ENCODE measurements at regions of chr3 and their contacts with region 1.

Region 1: DNA sequence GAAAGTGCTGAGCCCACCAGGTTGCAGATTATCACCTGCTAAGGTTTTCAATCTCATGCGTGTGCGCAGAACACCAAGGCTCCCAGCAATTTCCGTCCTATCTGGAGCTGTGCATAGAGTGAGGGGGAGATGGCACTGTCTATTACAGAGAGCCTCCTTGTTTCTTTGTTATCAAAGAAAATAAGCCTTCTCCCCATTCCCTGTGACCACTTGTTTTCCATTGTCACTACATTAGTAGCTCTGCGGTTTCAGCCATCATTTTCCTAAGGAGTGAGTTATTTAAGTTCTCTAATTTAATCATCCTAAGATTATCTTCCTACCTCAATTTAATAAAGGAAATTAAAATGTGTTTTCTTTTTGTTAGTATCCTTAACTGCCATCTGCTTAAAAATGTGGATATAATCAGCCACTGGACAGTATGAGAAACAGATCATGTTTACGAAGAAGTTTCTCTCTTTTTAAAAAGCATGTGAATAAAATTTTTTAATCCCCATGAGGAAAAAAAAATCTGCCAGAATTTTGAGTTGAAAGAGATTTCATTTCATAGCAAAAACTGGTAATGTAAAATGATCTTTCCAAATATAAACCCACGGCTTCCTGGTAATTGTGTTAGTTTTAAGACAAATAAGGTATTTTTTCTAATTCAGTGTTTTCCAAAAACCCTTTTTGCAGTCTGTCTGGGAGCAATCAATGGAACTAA is 172.3 kb upstream of the UBE2E1 start:
- DNase-seq: no peak
- ATAC-seq: no peak
- H3K4me3 ChIP-seq: no peak overlapping the region
- H3K27ac ChIP-seq: peak overlapping the region in 2 of 10 donors; percentile 1 to 6
- H3K4me1 ChIP-seq: peaks cover 0 to 11% (median 0%) of the 10 kb centered on the region in 9 donors
- H3K27me3 ChIP-seq: no peaks in the 10 kb centered on the region
- CTCF ChIP-seq: no peak

Region 2: GRCh38 chr3:23129817-23130216 is 503.6 kb before region 1 on chr3:
- intact Hi-C with region 1: no loop called
- DNase-seq: no peak
- ATAC-seq: peak in 1 of 8 donors; percentile 33
- H3K4me3 ChIP-seq: peak overlapping the region in 2 of 10 donors; percentile 6 to 31
- H3K27ac ChIP-seq: no peak overlapping the region
- H3K4me1 ChIP-seq: peaks cover 0 to 15% (median 4%) of the 10 kb centered on the region in 9 donors
- H3K27me3 ChIP-seq: no peaks in the 10 kb centered on the region
- CTCF ChIP-seq: no peak

Region 3: DNA sequence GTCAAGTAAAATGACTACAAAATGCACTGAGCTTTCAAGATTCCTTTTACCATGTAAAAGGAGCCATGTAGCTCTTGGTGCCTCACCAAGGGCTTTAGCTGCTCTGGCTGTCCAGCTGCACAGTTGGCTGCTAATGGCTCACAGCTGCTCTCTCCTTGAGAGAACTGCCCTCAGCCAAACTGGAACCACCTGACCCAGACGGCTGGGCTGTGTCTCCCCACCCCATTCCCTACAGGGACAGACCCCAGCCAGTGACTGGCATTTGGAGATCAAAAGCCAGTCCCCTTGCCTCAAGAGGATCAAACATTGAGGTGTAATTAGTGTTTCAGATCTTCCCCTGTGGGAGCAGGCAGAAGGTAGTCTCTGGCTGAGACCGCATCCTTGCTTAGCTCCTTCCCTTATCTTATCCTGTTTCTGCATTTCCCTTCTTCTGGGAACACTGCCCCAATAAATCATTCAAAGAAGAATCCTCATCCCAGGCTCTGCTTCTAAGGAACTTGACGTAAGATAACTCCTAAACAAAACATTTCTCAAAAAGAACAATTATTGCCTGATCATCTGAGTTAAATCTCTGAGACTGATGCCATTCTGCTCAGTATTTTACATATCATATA is 458.9 kb before region 1 on chr3:
- intact Hi-C with region 1: loop called in 1 of 10 experiments (anchors 10 kb)
- DNase-seq: peak; percentile 29 to 43
- ATAC-seq: peak in 7 of 8 donors; percentile 83 to 95 (median 88)
- H3K4me3 ChIP-seq: no peak overlapping the region
- H3K27ac ChIP-seq: peak overlapping the region in 3 of 10 donors; percentile 41 to 58 (median 55)
- H3K4me1 ChIP-seq: peaks cover 0 to 7% (median 0%) of the 10 kb centered on the region in 9 donors
- H3K27me3 ChIP-seq: no peaks in the 10 kb centered on the region
- CTCF ChIP-seq: no peak

Measured in heart right ventricle (tissue), 16 donors.